Naive thymus-derived CD4-positive, alpha-beta T cell (primary cell): ENCODE measurements at regions of chr4 and their contacts with region 1.

Region 1: DNA sequence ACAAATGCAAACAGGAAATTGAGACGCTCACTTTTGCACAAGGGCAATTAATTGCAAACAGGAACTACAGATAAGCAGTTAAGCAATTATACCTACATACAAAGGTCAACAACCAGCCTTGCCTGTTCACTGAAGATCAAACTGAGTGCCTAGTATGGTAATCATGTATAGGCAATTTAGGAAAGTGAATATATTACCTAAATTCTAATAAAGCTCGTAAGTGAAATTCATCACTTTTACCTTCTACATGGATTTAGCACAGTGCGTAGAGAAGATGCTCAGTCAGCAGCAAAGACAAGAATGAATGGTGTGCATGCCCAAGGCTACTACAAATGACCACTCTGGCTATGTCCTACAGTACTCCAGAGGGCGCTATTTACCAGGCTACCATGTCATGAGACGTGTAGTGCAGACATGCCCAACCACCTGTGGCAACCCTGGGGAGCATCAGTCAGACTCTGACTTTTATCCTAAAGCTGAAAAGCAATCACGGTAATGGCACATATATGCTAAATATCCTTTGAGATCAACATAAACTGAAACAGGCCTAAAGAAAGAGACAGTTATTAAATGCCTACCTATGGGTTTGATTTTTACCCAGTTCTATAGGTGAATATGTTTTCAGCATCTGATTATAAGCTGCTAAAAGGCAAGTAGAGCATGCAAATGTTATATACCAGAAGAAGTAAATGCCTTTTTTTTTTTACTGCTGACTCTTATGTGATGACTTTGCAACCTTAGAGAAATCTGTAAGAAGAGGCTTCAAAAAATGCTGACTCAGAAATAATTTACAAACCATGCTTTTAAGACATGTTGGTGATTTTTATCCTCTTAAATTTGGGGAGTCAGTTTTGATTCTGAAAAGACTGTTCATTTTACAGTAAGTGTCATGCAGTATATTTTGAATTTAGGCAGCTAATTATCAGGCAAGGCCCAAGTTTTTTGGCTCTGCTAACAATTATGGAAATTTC is 178.0 kb downstream of the PPP3CA start:
- DNase-seq: peak; percentile 9 to 64 (median 54)
- ATAC-seq: peak; percentile 96
- H3K4me3 ChIP-seq: no peak overlapping the region
- H3K4me3 Mint-ChIP-seq: no peak overlapping the region
- H3K27ac ChIP-seq: no peak overlapping the region
- H3K27ac Mint-ChIP-seq: no peak overlapping the region
- H3K4me1 ChIP-seq: no peaks in the 10 kb centered on the region
- H3K4me1 Mint-ChIP-seq: peaks cover 0 to 6% (median 3%) of the 10 kb centered on the region in 7 donors
- H3K27me3 ChIP-seq: no peaks in the 10 kb centered on the region
- H3K27me3 Mint-ChIP-seq: no peaks in the 10 kb centered on the region

Region 2: GRCh38 chr4:101439926-101440325 is 270.6 kb after region 1 on chr4:
- CTCF ChIA-PET with region 1: no interaction called
- POLR2A ChIA-PET with region 1: no interaction called
- intact Hi-C with region 1: loop called in 1 of 2 experiments (anchors 1 kb)
- DNase-seq: no peak
- ATAC-seq: no peak
- H3K4me3 ChIP-seq: no peak overlapping the region
- H3K4me3 Mint-ChIP-seq: no peak overlapping the region
- H3K27ac ChIP-seq: no peak overlapping the region
- H3K27ac Mint-ChIP-seq: no peak overlapping the region
- H3K4me1 ChIP-seq: no peaks in the 10 kb centered on the region
- H3K4me1 Mint-ChIP-seq: peaks cover 0 to 2% (median 0%) of the 10 kb centered on the region in 7 donors
- H3K27me3 ChIP-seq: no peaks in the 10 kb centered on the region
- H3K27me3 Mint-ChIP-seq: peaks cover 17 to 31% (median 21%) of the 10 kb centered on the region in 5 donors

Region 3: GRCh38 chr4:102263011-102263787 is 1093.9 kb after region 1 on chr4:
- CTCF ChIA-PET with region 1: no interaction called
- POLR2A ChIA-PET with region 1: no interaction called
- intact Hi-C with region 1: loop called (anchors 1 to 5 kb)
- DNase-seq: peak in 5 of 9 donors; percentile 0 to 45 (median 14)
- ATAC-seq: peak; percentile 67
- H3K4me3 ChIP-seq: no peak overlapping the region
- H3K4me3 Mint-ChIP-seq: no peak overlapping the region
- H3K27ac ChIP-seq: no peak overlapping the region
- H3K27ac Mint-ChIP-seq: peak overlapping the region in 2 of 9 donors; percentile 7 to 69
- H3K4me1 ChIP-seq: no peaks in the 10 kb centered on the region
- H3K4me1 Mint-ChIP-seq: peaks cover 0 to 13% (median 4%) of the 10 kb centered on the region in 7 donors
- H3K27me3 ChIP-seq: no peaks in the 10 kb centered on the region
- H3K27me3 Mint-ChIP-seq: no peaks in the 10 kb centered on the region